PC-9 (cell line): ENCODE measurements at regions of chr15 and their contacts with region 1.

Region 1: GRCh38 chr15:32849769-32850668 is 132.2 kb downstream of the GREM1 start:
- DNase-seq: peak in 1 of 2 experiments; percentile 96
- H3K4me3 ChIP-seq: no peak overlapping the region
- H3K27ac ChIP-seq: peak overlapping the region; percentile 91
- H3K4me1 ChIP-seq: peaks cover 46% of the 10 kb centered on the region
- H3K27me3 ChIP-seq: no peaks in the 10 kb centered on the region
- CTCF ChIP-seq: no peak

Region 2: GRCh38 chr15:32663671-32664070 is 186.3 kb before region 1 on chr15:
- CTCF ChIA-PET with region 1: no interaction called
- POLR2A ChIA-PET with region 1: no interaction called
- intact Hi-C with region 1: loop called (anchors 2 kb)
- DNase-seq: no peak
- H3K4me3 ChIP-seq: no peak overlapping the region
- H3K27ac ChIP-seq: no peak overlapping the region
- H3K4me1 ChIP-seq: peaks cover 12% of the 10 kb centered on the region
- H3K27me3 ChIP-seq: no peaks in the 10 kb centered on the region
- CTCF ChIP-seq: no peak

Region 3: DNA sequence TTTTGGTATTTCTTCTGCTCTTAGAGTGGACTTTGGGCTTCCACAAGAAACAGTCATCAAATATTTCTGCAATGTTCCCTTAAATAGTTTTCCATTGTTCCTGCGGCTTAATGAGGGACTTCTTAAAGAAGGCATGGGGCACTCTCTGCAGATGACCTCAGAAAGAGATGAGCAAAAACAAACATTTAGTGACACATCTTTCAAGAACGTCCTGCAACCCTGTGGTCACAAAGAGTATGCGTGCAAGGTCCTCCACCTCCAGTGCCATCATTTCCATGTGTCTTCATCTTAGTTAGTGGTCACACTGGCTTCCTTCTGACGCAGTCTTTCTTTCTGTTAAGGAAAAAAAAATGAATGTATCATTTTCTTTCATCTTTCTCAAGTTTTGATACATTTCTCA is 76.0 kb before region 1 on chr15:
- CTCF ChIA-PET with region 1: no interaction called
- POLR2A ChIA-PET with region 1: interaction called, 3 read pairs
- intact Hi-C with region 1: loop called (anchors 2 kb)
- DNase-seq: peak; percentile 52 to 76
- H3K4me3 ChIP-seq: no peak overlapping the region
- H3K27ac ChIP-seq: peak overlapping the region; percentile 61
- H3K4me1 ChIP-seq: peaks cover 18% of the 10 kb centered on the region
- H3K27me3 ChIP-seq: no peaks in the 10 kb centered on the region
- CTCF ChIP-seq: no peak

Region 4: DNA sequence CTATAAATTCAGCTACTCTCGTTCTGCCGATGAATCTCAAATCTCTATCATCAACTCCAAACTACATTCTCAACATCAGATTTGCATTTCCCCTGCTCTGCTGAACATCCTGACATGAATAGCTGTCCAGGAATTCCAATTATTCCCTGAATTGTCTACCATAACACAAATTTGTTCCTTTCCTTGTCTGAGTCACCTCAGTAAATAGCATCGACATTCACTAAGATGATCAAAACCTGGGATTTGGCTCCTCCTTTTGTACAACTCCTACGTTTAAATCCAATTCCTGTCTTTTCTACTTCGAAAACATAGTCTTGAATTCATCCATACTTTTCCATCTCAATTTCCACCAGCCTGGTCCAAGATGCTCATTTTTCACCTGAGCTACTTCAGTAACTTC is 25.2 kb before region 1 on chr15:
- CTCF ChIA-PET with region 1: no interaction called
- POLR2A ChIA-PET with region 1: no interaction called
- intact Hi-C with region 1: loop called (anchors 2 kb)
- DNase-seq: peak; percentile 25 to 88
- H3K4me3 ChIP-seq: no peak overlapping the region
- H3K27ac ChIP-seq: peak overlapping the region; percentile 74
- H3K4me1 ChIP-seq: peaks cover 23% of the 10 kb centered on the region
- H3K27me3 ChIP-seq: no peaks in the 10 kb centered on the region
- CTCF ChIP-seq: no peak